HAP-1 (cell line): ENCODE measurements at regions of chr6 and their contacts with region 1.

Region 1: DNA sequence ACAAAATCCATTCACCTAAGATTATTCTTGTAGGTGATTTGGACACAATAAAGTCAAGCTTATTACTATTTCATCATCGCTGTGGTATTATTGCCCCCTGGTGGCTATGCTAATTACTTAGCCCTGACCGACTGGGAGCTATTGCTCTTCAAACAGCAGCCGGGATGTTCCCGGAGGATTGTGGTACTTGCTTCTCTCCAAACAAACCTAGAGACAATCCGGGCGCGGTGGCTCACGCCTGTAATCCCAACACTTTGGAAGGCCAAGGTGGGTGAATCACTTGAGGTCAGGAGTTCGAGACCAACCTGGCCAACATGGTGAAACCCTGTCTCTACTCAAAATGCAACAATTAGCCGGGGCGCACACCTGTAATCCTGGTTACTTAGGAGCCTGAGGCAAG is 15.4 kb upstream of the STMND1 start:
- DNase-seq: peak; percentile 47 to 79
- H3K4me3 ChIP-seq: no peak overlapping the region
- H3K4me1 ChIP-seq: peaks cover 7% of the 10 kb centered on the region
- H3K27me3 ChIP-seq: no peaks in the 10 kb centered on the region

Region 2: GRCh38 chr6:16514249-16514648 is 572.2 kb before region 1 on chr6:
- in situ Hi-C with region 1: loop called (anchors 25 kb)
- DNase-seq: peak; percentile 10 to 40
- H3K4me3 ChIP-seq: no peak overlapping the region
- H3K4me1 ChIP-seq: no peaks in the 10 kb centered on the region
- H3K27me3 ChIP-seq: no peaks in the 10 kb centered on the region

Region 3: GRCh38 chr6:16770701-16771569 is 315.5 kb before region 1 on chr6:
- in situ Hi-C with region 1: loop called (anchors 10 kb)
- DNase-seq: peak; percentile 64 to 86
- H3K4me3 ChIP-seq: no peak overlapping the region
- H3K4me1 ChIP-seq: peaks cover 12% of the 10 kb centered on the region
- H3K27me3 ChIP-seq: no peaks in the 10 kb centered on the region